ENCODE measurements at regions of chr19 and their contacts with region 1.

Region 1: GRCh38 chr19:41531438-41532311 is 44.3 kb upstream of the CEACAM21 start:
- DNase-seq: peak; percentile 76
- CTCF ChIP-seq: no peak

Region 2: DNA sequence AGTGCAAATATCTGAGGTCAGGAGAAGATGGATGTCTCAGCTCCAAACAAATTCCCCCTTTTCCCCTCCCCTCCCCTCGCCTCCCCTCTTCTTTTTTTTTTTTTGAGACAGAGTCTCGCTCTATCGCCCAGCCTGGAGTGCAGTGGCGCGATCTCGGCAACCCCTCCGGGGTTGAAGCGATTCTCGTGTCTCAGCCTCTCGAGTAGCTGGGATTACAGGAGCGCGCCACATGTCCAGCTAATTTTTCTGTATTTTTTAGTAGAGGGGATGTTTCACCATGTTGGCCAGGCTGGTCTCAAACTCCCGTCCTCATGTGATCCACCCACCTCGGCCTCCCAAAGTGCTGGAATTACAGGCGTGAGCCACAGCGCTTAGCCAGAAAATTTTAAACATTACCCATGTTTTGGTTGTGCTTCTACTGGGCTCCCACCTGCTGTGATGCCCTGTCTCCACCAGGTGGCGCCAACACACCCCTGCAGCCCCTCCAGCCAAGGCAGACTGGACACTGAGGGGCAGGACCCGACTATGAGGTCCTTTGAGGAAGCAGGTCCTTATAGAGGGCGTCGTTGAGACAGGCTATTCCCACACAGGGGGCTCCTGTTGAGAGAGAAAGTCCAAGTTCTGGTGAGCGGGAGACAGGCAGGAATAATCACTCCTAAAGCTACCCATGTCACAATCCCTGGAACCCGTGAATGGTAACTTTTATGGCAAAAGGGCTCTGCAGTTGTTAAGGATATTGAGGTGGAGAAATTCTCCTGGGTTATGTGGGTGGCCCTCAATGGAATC is 82.4 kb before region 1 on chr19:
- CTCF ChIA-PET with region 1: interaction called, 24 read pairs
- POLR2A ChIA-PET with region 1: interaction called, 4 read pairs
- DNase-seq: peak; percentile 90
- CTCF ChIP-seq: peak; percentile 97

Region 3: DNA sequence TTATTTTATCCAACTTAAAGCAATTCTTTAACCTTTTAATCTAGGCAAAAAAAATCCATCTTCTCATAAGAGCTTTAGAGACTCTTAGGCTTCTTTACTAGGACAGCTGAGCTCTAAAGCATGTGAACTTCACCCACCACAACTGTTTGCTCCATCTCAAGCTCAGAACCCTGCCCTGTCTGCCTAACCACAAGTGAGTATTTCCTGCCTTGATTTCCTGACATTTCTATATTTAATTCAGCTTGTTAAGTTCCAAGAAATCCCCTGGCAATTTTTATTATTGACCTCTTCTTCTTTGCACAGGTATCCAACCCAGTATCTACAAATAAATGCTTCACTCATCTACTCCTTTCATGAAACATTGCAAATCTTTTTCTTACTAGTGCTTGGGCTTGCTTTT is 23.2 kb after region 1 on chr19:
- CTCF ChIA-PET with region 1: interaction called, 38 read pairs
- POLR2A ChIA-PET with region 1: interaction called, 26 read pairs
- DNase-seq: no peak
- CTCF ChIP-seq: no peak

Region 4: GRCh38 chr19:41570639-41571112 is 39.0 kb after region 1 on chr19:
- CTCF ChIA-PET with region 1: interaction called, 35 read pairs
- POLR2A ChIA-PET with region 1: interaction called, 10 read pairs
- DNase-seq: peak; percentile 80
- CTCF ChIP-seq: peak; percentile 95

Region 5: DNA sequence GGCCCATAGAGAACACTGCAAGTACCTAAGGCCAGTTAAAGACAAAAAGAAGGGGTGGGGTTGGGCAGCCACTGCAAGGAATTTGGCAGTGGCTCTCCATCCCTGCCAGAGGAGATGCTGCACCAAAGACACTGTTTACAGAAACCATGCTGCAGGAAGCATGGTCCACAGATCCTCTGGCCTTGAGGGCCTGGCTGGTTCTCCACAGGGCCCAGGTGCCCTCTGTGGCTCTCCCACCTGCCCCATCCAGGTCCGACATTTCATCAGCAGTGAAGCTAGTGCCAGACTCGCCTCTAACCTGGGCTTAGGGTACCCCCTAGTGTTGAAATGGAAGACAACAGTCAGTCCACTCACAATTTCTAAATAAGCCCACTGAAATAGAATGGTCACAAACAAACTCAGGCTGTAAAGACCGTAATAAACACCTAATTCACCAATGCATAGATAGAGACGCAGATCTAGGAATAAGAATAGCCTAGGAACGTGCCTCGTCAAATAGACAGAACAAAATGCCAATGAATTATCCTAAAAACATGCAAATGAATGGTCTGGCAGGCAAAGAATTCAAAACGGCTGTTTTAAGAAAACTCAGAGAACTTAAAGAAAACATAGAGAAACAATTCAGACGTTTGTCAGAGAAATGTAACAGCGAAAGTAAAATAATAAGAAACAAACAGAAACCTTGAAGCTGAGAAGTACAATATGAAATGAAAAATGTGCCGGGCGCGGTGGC is 289.5 kb after region 1 on chr19:
- CTCF ChIA-PET with region 1: no interaction called
- POLR2A ChIA-PET with region 1: no interaction called
- DNase-seq: peak; percentile 83
- CTCF ChIP-seq: peak; percentile 59

Measured in GM10248 (cell line).